Mammary epithelial cell (primary cell): ENCODE measurements at regions of chr10 and their contacts with region 1.

Region 1: DNA sequence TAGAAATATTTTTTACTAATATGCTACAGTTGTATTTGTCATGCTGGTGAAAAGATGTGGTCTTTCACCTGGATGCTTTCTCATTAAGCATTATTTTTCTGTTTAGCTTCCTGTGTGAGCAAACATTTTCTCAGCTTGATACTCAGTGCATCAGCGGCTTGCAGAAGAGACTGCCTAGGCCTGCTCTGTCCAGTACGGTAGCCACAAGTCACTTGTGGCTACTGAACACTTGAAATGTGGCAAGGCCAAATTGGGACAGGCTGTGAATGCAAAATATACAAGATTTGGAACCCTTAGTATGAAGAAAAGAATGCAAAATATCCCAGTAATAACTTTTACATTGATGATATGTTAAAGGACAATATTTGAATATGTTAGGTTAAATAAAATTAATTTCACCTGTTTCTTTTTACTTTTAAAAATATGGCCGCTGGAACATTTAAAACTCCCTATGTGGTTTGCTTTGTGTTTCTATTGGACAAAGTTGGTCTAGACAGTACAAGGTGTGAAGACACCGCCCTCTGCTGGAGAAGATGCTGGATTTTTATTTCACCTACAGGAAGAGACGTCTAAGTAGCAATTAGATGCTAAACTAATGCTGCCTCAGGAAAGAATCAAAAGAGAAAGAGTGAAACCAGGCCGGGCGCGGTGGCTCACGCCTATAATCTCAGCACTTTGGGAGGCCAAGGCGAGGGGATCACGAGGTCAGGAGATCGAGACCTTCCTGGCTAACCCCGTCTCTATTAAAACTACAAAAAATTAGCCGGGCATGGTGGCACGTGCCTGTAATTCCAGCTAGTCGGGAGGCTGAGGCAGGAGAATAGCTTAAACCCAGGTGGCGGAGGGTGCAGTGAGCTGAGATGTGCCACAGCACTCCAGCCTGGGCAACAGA is 5.3 kb downstream of the SRGN start:
- DNase-seq: peak; percentile 77
- H3K4me3 ChIP-seq: no peak overlapping the region
- H3K27ac ChIP-seq: no peak overlapping the region
- H3K4me1 ChIP-seq: no peaks in the 10 kb centered on the region
- H3K27me3 ChIP-seq: no peaks in the 10 kb centered on the region
- CTCF ChIP-seq: peak; percentile 57 to 77

Region 2: GRCh38 chr10:68955832-68956532 is 137.2 kb before region 1 on chr10 and contains the start of gene DDX21:
- CTCF ChIA-PET with region 1: no interaction called
- dilution Hi-C with region 1: no loop called
- in situ Hi-C with region 1: no loop called
- intact Hi-C with region 1: loop called (anchors 1 kb)
- DNase-seq: peak; percentile 90
- H3K4me3 ChIP-seq: peak within 1 kb of the TSS; percentile 67 to 82 (median 74)
- H3K27ac ChIP-seq: peak within 1 kb of the TSS; percentile 91
- H3K4me1 ChIP-seq: peaks cover 10% of the 10 kb centered on the region
- H3K27me3 ChIP-seq: no peaks in the 10 kb centered on the region
- CTCF ChIP-seq: peak; percentile 63 to 67
- total RNA-seq, gene DDX21: 92.9 to 142 TPM

Region 3: GRCh38 chr10:69004821-69005220 is 88.4 kb before region 1 on chr10:
- CTCF ChIA-PET with region 1: no interaction called
- dilution Hi-C with region 1: no loop called
- in situ Hi-C with region 1: loop called in 1 of 2 experiments (anchors 5 kb)
- intact Hi-C with region 1: loop called (anchors 1 kb)
- DNase-seq: no peak
- H3K4me3 ChIP-seq: no peak overlapping the region
- H3K27ac ChIP-seq: no peak overlapping the region
- H3K4me1 ChIP-seq: no peaks in the 10 kb centered on the region
- H3K27me3 ChIP-seq: no peaks in the 10 kb centered on the region
- CTCF ChIP-seq: peak; percentile 32 to 47

Region 4: DNA sequence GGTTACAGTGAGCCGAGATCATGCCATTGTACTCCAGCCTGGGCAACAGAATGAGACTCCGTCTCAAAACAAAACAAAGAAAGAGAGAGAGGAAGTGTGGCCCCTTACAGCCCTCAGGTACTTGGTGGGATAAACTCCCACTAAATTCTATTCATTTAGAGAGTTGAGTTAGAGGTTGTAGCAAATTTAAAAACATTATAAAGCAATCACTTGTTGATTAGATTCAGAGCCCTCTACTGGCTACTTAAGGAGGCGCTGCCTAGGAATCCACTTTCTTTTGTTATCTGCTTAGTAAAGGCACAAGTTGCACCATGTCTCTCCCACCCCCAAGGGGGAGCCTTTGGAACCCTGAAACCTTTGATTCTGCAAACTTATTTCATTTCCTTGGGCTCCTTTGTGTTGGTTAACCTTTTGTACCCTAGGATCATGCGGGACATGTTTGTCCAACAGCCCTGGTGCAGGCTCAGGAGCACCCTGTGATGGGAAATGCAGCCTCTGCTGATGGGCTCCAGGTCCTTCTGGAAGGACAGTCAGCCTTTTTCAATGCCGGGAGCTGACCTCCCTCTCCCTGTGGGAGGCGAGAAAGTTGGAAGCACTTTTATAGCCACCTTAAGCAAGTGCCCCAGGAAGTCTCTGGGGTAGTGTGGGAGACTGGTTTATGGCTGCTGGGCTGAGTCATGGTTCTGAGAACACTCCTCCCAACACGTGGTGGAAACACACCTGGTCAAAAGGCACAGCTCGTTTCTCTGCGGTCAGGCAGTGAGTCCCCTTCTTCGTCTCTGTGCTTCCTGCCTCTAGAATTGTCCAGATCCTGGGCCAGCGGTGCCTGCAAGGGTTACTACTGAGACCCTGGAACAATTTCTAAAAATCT is 129.2 kb after region 1 on chr10:
- CTCF ChIA-PET with region 1: no interaction called
- dilution Hi-C with region 1: no loop called
- in situ Hi-C with region 1: no loop called
- intact Hi-C with region 1: loop called (anchors 1 kb)
- DNase-seq: peak; percentile 96
- H3K4me3 ChIP-seq: peak overlapping the region in 2 of 3 experiments; percentile 13 to 22
- H3K27ac ChIP-seq: peak overlapping the region; percentile 79
- H3K4me1 ChIP-seq: peaks cover 44% of the 10 kb centered on the region
- H3K27me3 ChIP-seq: no peaks in the 10 kb centered on the region
- CTCF ChIP-seq: peak; percentile 72 to 80

Region 5: DNA sequence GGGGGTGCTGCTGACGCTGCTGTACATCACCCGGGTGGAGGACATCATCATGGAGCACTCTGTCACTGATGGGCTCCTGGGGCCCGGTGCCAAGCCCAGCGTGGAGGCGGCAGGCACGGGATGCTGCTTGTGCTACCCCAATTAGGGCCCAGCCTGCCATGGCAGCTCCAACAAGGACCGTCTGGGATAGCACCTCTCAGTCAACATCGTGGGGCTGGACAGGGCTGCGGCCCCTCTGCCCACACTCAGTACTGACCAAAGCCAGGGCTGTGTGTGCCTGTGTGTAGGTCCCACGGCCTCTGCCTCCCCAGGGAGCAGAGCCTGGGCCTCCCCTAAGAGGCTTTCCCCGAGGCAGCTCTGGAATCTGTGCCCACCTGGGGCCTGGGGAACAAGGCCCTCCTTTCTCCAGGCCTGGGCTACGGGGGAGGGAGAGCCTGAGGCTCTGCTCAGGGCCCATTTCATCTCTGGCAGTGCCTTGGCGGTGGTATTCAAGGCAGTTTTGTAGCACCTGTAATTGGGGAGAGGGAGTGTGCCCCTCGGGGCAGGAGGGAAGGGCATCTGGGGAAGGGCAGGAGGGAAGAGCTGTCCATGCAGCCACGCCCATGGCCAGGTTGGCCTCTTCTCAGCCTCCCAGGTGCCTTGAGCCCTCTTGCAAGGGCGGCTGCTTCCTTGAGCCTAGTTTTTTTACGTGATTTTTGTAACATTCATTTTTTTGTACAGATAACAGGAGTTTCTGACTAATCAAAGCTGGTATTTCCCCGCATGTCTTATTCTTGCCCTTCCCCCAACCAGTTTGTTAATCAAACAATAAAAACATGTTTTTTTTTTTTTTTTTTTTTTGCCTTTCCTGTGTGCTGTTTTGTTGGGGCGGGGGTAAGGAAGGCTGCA is 413.9 kb after region 1 on chr10:
- CTCF ChIA-PET with region 1: no interaction called
- dilution Hi-C with region 1: no loop called
- in situ Hi-C with region 1: no loop called
- intact Hi-C with region 1: loop called (anchors 10 kb)
- DNase-seq: no peak
- H3K4me3 ChIP-seq: no peak overlapping the region
- H3K27ac ChIP-seq: no peak overlapping the region
- H3K4me1 ChIP-seq: no peaks in the 10 kb centered on the region
- H3K27me3 ChIP-seq: peaks cover 6% of the 10 kb centered on the region
- CTCF ChIP-seq: no peak